Caco-2 (cell line): ENCODE measurements at regions of chr20 and their contacts with region 1.

Region 1: DNA sequence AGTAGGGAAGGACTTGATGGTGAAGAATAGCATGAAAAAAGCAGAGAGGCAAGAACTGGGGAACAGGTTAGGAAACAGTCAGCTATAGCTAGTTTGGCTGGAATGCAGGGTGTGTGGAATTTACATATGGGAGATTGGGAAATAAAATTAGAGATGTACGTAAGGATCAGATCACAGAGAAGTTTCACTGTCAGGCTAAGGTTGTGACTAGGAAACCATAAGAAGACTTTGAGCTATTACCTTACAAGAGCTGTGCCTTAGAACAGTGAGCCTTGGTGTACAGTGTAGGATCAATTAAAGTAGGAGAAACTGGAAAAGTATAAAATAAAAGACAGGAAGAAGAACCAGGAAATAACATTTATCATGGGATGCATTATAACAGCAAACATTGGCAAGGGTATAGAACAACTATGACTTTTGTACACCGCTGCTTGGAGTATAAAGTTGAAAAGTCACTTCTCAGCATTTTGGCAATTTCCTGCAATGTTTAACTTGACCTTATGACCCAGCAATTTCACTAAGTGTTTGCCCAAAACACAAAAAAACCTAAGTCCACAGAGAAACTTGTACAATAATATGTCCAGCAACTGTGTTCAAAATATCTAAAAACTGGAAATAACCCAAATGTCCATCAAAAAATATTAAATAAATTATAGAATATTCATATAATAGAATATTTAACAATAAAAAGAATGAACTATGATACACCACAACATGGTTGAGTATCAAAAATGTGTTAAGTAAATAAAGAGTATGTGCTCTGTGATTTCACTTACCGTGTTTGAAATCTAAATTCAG is 31.2 kb upstream of the SPTLC3 start:
- DNase-seq: no peak
- H3K4me3 ChIP-seq: no peak overlapping the region
- H3K4me3 Mint-ChIP-seq: peak overlapping the region; percentile 4
- H3K27ac Mint-ChIP-seq: peak overlapping the region; percentile 40
- H3K4me1 ChIP-seq: peaks cover 29% of the 10 kb centered on the region
- H3K4me1 Mint-ChIP-seq: peaks cover 19% of the 10 kb centered on the region
- H3K27me3 ChIP-seq: no peaks in the 10 kb centered on the region
- H3K27me3 Mint-ChIP-seq: no peaks in the 10 kb centered on the region
- CTCF ChIP-seq: no peak

Region 2: DNA sequence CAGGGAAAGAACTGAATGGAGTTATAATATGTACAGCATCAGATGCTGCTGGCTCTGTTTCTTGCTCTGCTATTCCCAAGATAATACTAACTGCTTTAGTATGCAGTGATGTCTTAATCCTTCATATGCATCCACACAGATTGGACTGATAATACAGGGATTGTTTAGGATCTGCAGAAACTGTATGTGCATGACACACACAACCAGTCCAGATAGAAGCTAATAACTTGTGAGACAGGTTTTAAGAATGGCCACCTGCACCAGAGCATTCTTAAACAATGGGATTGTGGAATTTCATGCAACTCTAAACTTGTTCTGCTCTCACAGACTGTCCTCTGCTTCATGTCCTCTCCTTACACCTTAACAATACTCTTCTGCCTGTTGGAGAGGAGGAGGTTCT is 122.1 kb after region 1 on chr20:
- CTCF ChIA-PET with region 1: no interaction called
- POLR2A ChIA-PET with region 1: no interaction called
- intact Hi-C with region 1: loop called (anchors 2 kb)
- DNase-seq: peak in 1 of 2 experiments; percentile 41
- H3K4me3 ChIP-seq: no peak overlapping the region
- H3K4me3 Mint-ChIP-seq: no peak overlapping the region
- H3K27ac Mint-ChIP-seq: peak overlapping the region; percentile 62
- H3K4me1 ChIP-seq: peaks cover 94% of the 10 kb centered on the region
- H3K4me1 Mint-ChIP-seq: peaks cover 69% of the 10 kb centered on the region
- H3K27me3 ChIP-seq: no peaks in the 10 kb centered on the region
- H3K27me3 Mint-ChIP-seq: no peaks in the 10 kb centered on the region
- CTCF ChIP-seq: no peak

Region 3: GRCh38 chr20:13212750-13213149 is 235.2 kb after region 1 on chr20:
- CTCF ChIA-PET with region 1: no interaction called
- POLR2A ChIA-PET with region 1: no interaction called
- intact Hi-C with region 1: no loop called
- DNase-seq: no peak
- H3K4me3 ChIP-seq: no peak overlapping the region
- H3K4me3 Mint-ChIP-seq: no peak overlapping the region
- H3K27ac Mint-ChIP-seq: no peak overlapping the region
- H3K4me1 ChIP-seq: no peaks in the 10 kb centered on the region
- H3K4me1 Mint-ChIP-seq: no peaks in the 10 kb centered on the region
- H3K27me3 ChIP-seq: no peaks in the 10 kb centered on the region
- H3K27me3 Mint-ChIP-seq: peaks cover 16% of the 10 kb centered on the region
- CTCF ChIP-seq: no peak